Activated naive CD4-positive, alpha-beta T cell treated with anti-CD3 and anti-CD28 coated beads for 36 hours (primary cell): ENCODE measurements at regions of chr3 and their contacts with region 1.

Region 1: GRCh38 chr3:16520970-16521881 is 7.7 kb upstream of the RFTN1 start:
- DNase-seq: peak; percentile 53
- H3K4me3 Mint-ChIP-seq: no peak overlapping the region
- H3K27ac Mint-ChIP-seq: peak overlapping the region; percentile 87
- H3K4me1 Mint-ChIP-seq: peaks cover 67% of the 10 kb centered on the region
- H3K27me3 Mint-ChIP-seq: no peaks in the 10 kb centered on the region

Region 2: DNA sequence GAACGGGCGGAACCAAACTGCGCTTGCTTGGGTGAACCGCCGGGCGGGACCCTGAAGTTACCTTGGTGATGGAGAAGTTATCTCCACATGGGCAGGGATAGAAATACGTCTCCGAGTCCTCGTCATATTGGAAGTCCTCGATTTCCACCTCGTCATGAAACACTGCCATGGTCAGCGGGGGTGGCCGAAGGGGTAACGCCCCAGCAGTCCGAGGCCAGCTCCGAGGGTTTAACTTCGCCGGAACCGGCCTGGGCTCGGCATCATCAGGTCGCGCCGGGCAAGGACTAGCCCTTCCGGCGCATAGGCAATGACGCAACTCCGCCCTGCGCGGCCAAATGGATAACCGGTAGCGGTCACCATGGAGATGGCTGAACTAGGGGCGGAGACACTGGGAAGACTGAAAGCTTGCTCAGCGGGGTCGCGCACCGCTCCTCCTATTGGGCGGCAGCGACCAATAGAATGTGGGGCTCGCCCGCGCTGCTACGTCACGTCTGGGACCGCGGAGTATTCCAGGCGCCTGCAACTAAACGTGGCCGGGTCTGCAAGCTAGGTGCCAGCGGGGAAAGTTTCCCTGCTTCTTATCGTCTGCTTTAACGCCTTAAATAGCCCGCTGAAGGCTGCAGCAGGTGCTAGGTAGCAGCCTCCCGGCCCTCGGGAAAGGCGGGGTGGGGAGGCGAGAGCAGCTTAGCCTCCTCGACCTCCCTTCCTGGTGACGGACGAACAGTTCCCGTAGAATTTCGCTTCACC is 256.3 kb before region 1 on chr3 and contains the starts of genes DPH3 and OXNAD1:
- CTCF ChIA-PET with region 1: no interaction called
- intact Hi-C with region 1: loop called (anchors 2 kb)
- DNase-seq: peak; percentile 100
- H3K4me3 Mint-ChIP-seq: peak within 1 kb of the TSS; percentile 96
- H3K27ac Mint-ChIP-seq: peak within 1 kb of the TSS; percentile 94
- H3K4me1 Mint-ChIP-seq: peaks cover 31% of the 10 kb centered on the region
- H3K27me3 Mint-ChIP-seq: no peaks in the 10 kb centered on the region
- total RNA-seq, gene DPH3: 16.1 to 17.0 TPM
- total RNA-seq, gene OXNAD1: 32.4 to 34.2 TPM

Region 3: GRCh38 chr3:16378920-16379319 is 142.3 kb before region 1 on chr3:
- CTCF ChIA-PET with region 1: no interaction called
- intact Hi-C with region 1: loop called (anchors 1 kb)
- DNase-seq: peak; percentile 44
- H3K4me3 Mint-ChIP-seq: no peak overlapping the region
- H3K27ac Mint-ChIP-seq: peak overlapping the region; percentile 80
- H3K4me1 Mint-ChIP-seq: peaks cover 82% of the 10 kb centered on the region
- H3K27me3 Mint-ChIP-seq: no peaks in the 10 kb centered on the region

Region 4: GRCh38 chr3:16482770-16483531 is 38.3 kb before region 1 on chr3:
- CTCF ChIA-PET with region 1: interaction called, 3 read pairs
- intact Hi-C with region 1: loop called (anchors 1 kb)
- DNase-seq: peak; percentile 62
- H3K4me3 Mint-ChIP-seq: peak overlapping the region; percentile 3
- H3K27ac Mint-ChIP-seq: peak overlapping the region; percentile 74
- H3K4me1 Mint-ChIP-seq: peaks cover 82% of the 10 kb centered on the region
- H3K27me3 Mint-ChIP-seq: no peaks in the 10 kb centered on the region

Region 5: DNA sequence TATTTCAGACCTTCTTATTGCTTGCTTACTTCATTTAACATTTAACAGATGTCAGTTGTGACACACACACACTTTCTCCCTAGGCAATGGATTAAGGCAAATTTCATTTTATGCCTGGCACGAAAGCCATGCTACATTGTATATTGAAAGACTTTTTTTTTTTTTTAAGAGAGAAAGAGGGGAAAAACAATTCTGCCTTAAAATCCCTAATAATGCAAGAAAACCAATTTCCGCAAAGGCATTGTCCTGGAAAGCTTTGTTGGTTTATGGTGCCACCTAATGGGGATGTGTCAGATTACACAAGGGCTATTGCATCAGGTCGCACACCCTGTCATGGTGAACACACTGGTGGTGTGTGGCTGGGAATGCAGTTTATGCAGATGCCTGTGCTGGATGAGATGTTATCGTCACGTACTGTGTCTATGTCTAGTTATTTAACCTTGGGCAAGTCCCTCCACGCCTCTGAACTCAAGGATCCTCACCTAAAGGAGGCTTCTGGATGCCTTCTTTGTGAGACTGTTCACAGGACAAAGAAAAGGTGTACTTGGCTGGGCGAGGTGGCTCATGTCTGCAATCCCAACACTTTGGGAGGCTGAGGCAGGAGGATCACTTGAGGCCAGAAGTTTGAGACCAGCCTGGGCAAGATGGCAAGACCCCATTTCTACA is 29.6 kb after region 1 on chr3:
- CTCF ChIA-PET with region 1: interaction called, 4 read pairs
- intact Hi-C with region 1: loop called (anchors 1 kb)
- DNase-seq: peak; percentile 94
- H3K4me3 Mint-ChIP-seq: peak overlapping the region; percentile 22
- H3K27ac Mint-ChIP-seq: peak overlapping the region; percentile 77
- H3K4me1 Mint-ChIP-seq: peaks cover 17% of the 10 kb centered on the region
- H3K27me3 Mint-ChIP-seq: no peaks in the 10 kb centered on the region